CD8-positive, alpha-beta T cell (primary cell): ENCODE measurements at regions of chr18 and their contacts with region 1.

Region 1: DNA sequence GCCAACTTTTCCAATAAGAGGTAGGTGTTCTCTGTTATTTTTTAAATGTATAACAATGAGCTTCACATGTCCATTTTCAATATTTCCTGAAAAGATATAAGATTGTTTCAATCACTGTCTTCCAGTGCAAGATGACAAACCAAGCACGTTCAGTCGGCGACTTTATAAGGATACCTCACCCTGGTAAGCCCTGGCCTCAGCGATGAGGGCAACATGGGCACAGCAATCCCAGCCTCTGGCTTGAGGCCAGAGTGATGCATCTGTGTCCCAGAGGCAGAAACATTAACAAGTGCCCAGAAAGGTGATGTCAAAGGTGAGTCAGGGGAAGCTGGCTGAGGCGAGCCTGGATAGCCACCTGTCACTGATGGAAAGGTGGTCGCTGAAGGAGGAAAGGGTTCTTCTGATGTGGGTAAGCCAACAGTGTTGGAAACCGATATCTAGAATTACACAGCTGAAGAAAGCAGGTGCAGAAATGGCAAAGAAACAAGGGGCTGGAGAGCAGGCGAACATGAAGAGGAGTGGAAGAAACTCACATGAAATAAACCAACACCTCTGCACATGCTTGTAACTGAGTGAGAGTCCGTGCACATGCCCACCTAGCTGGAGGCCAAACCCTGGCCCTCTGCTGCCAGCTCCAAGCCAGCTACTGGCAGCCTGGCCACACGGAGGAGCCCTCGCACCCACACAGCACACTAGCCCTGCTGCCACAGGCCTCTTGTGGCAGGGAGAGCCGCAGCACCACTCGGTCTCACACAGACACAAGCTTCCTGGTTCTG is 65.5 kb downstream of the FBXO15 start:
- DNase-seq: peak; percentile 25 to 82 (median 64)
- ATAC-seq: peak; percentile 96
- H3K4me3 ChIP-seq: peak overlapping the region; percentile 9 to 28
- H3K4me3 Mint-ChIP-seq: peak overlapping the region; percentile 82
- H3K27ac ChIP-seq: peak overlapping the region; percentile 39 to 65
- H3K27ac Mint-ChIP-seq: peak overlapping the region; percentile 98
- H3K4me1 ChIP-seq: peaks cover 18% of the 10 kb centered on the region
- H3K4me1 Mint-ChIP-seq: peaks cover 17% of the 10 kb centered on the region
- H3K27me3 ChIP-seq: no peaks in the 10 kb centered on the region
- H3K27me3 Mint-ChIP-seq: no peaks in the 10 kb centered on the region
- CTCF ChIP-seq: no peak

Region 2: DNA sequence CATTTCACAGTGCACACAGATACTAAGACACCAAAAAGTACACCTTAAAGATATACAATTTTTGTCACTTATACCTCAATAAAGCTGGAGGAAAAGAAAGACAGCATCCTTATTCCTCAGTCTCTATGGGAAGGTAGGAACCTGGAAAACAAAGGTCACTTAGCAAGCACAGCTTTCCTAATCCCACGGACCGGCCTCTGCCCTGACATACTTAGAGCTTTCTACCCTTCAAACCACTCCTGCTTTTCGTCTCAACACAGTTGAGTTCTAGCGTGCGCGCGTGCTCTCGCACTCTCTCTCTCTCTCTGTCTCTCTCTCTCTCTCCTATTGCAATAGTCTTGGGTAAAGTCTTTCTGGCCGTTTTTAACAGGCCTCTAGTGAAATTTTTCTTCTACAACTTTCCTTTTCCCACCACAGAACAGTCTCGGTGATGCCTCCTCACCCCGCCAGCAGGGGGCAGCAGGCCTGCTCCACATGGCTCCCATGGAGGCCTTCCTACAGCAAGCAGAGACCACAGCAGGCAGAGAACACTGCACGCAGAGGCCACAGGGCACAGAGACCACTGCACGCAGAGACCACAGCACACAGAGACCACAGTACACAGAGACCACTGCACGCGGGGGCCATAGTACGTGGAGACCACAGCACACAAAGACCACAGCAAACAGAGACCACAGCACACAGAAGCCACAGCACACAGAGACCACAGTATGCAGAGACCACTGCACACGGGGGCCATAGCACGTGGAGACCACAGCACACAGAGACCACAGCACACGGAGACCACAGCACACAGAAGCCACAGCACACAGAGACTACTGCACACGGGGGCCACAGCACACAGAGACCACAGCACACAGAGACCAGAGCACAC is 41.5 kb before region 1 on chr18:
- CTCF ChIA-PET with region 1: interaction called, 10 read pairs
- POLR2A ChIA-PET with region 1: no interaction called
- intact Hi-C with region 1: no loop called
- DNase-seq: peak; percentile 22 to 70 (median 62)
- ATAC-seq: peak; percentile 86
- H3K4me3 ChIP-seq: no peak overlapping the region
- H3K4me3 Mint-ChIP-seq: no peak overlapping the region
- H3K27ac ChIP-seq: no peak overlapping the region
- H3K27ac Mint-ChIP-seq: no peak overlapping the region
- H3K4me1 ChIP-seq: no peaks in the 10 kb centered on the region
- H3K4me1 Mint-ChIP-seq: no peaks in the 10 kb centered on the region
- H3K27me3 ChIP-seq: peaks cover 0 to 2% of the 10 kb centered on the region in 2 experiments
- H3K27me3 Mint-ChIP-seq: no peaks in the 10 kb centered on the region
- CTCF ChIP-seq: peak; percentile 67

Region 3: DNA sequence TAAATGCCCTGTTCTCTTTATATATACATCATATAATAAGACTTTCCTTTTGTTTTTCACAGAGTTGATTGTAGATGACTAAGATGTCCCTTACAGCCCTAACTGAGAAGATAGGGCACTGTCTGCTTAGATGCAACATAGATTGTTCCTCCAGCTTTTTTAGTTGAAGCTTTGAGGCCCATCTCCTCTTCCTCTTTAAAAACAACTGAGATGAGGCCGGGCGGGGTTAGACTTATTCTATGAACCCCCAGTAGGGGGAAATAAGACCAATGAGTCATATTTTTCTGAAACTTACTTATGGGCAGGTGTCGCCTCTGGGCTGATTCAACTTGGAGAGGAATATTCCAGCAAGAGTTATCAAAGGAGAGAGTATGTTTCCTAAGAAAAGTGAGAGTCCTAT is 19.1 kb before region 1 on chr18:
- CTCF ChIA-PET with region 1: interaction called, 10 read pairs
- POLR2A ChIA-PET with region 1: interaction called, 16 read pairs
- intact Hi-C with region 1: no loop called
- DNase-seq: peak in 1 of 9 experiments; percentile 25
- ATAC-seq: no peak
- H3K4me3 ChIP-seq: no peak overlapping the region
- H3K4me3 Mint-ChIP-seq: no peak overlapping the region
- H3K27ac ChIP-seq: no peak overlapping the region
- H3K27ac Mint-ChIP-seq: no peak overlapping the region
- H3K4me1 ChIP-seq: peaks cover 22% of the 10 kb centered on the region
- H3K4me1 Mint-ChIP-seq: peaks cover 32% of the 10 kb centered on the region
- H3K27me3 ChIP-seq: no peaks in the 10 kb centered on the region
- H3K27me3 Mint-ChIP-seq: no peaks in the 10 kb centered on the region
- CTCF ChIP-seq: peak; percentile 5

Region 4: GRCh38 chr18:74116633-74117554 is 34.7 kb after region 1 on chr18:
- CTCF ChIA-PET with region 1: interaction called, 19 read pairs
- POLR2A ChIA-PET with region 1: interaction called, 3 read pairs
- intact Hi-C with region 1: loop called (anchors 1 kb)
- DNase-seq: peak in 4 of 9 experiments; percentile 14 to 48 (median 24)
- ATAC-seq: no peak
- H3K4me3 ChIP-seq: no peak overlapping the region
- H3K4me3 Mint-ChIP-seq: no peak overlapping the region
- H3K27ac ChIP-seq: no peak overlapping the region
- H3K27ac Mint-ChIP-seq: no peak overlapping the region
- H3K4me1 ChIP-seq: no peaks in the 10 kb centered on the region
- H3K4me1 Mint-ChIP-seq: peaks cover 8% of the 10 kb centered on the region
- H3K27me3 ChIP-seq: no peaks in the 10 kb centered on the region
- H3K27me3 Mint-ChIP-seq: no peaks in the 10 kb centered on the region
- CTCF ChIP-seq: peak; percentile 42

Region 5: GRCh38 chr18:74147779-74148542 is 65.8 kb after region 1 on chr18 and contains the starts of genes FBXO15 and TIMM21:
- CTCF ChIA-PET with region 1: interaction called, 4 read pairs
- POLR2A ChIA-PET with region 1: no interaction called
- intact Hi-C with region 1: loop called in 1 of 2 experiments (anchors 1 kb)
- DNase-seq: peak; percentile 89 to 99 (median 96)
- ATAC-seq: peak; percentile 83
- H3K4me3 ChIP-seq: peak within 1 kb of the TSS; percentile 84 to 91
- H3K4me3 Mint-ChIP-seq: peak within 1 kb of the TSS; percentile 90
- H3K27ac ChIP-seq: peak within 1 kb of the TSS; percentile 92 to 99
- H3K27ac Mint-ChIP-seq: peak within 1 kb of the TSS; percentile 92
- H3K4me1 ChIP-seq: peaks cover 21% of the 10 kb centered on the region
- H3K4me1 Mint-ChIP-seq: peaks cover 53% of the 10 kb centered on the region
- H3K27me3 ChIP-seq: no peaks in the 10 kb centered on the region
- H3K27me3 Mint-ChIP-seq: no peaks in the 10 kb centered on the region
- CTCF ChIP-seq: no peak
- total RNA-seq, gene FBXO15: 1.0 to 1.3 TPM
- total RNA-seq, gene TIMM21: 20.2 to 20.8 TPM

Region 6: GRCh38 chr18:74196220-74197119 is 114.3 kb after region 1 on chr18:
- CTCF ChIA-PET with region 1: interaction called, 3 read pairs
- POLR2A ChIA-PET with region 1: no interaction called
- intact Hi-C with region 1: loop called in 1 of 2 experiments (anchors 1 kb)
- DNase-seq: peak; percentile 8 to 86 (median 46)
- ATAC-seq: peak; percentile 98
- H3K4me3 ChIP-seq: peak overlapping the region; percentile 21 to 42
- H3K4me3 Mint-ChIP-seq: peak overlapping the region; percentile 79
- H3K27ac ChIP-seq: no peak overlapping the region
- H3K27ac Mint-ChIP-seq: peak overlapping the region; percentile 85
- H3K4me1 ChIP-seq: peaks cover 4% of the 10 kb centered on the region
- H3K4me1 Mint-ChIP-seq: peaks cover 6% of the 10 kb centered on the region
- H3K27me3 ChIP-seq: no peaks in the 10 kb centered on the region
- H3K27me3 Mint-ChIP-seq: peaks cover 18% of the 10 kb centered on the region
- CTCF ChIP-seq: peak; percentile 89